Psoas muscle (tissue), 8 donors: ENCODE measurements at regions of chr1 and their contacts with region 1.

Region 1: DNA sequence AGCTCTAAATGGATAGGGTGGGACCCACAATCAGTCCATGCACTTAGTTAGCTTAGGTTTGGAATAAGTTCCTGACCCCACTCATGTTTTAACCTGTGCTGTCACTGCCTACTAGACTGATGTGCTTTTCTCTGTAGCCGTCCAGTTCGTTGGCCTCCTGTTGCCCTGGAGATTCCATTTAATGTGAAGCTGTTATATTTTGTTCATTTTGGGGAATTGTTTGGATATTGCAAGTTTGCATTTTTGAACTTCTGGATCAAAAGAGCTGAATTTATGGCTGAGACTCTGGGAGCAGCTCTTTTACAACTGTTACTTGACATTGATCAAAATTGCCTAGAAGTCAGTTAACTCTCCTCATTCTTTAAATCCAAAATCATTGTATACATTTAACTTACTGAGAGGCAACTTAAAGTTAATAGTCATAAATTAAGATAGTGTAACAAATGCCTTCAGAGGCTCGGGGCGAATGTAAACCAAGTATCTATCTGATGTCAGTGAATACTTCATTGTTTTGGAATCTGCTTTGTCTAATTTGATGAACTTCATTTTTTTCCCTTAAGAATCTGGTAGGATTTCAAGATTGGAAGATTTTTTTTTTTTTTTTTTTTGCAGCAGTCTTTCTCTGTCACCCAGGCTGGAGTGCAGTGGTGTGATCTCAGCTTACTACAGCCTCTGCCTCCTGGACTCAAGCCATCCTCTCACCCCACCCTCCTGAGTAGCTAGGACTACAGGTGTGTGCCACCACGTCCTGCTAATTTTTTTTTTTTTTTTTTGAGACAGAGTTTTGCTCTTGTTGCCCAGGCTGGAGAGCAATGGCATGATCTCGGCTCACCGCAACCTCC is 38.1 kb downstream of the MIGA1 start:
- DNase-seq: no peak
- ATAC-seq: no peak
- H3K4me3 ChIP-seq: no peak overlapping the region
- H3K27ac ChIP-seq: no peak overlapping the region
- H3K4me1 ChIP-seq: no peaks in the 10 kb centered on the region
- H3K27me3 ChIP-seq: no peaks in the 10 kb centered on the region
- CTCF ChIP-seq: no peak

Region 2: DNA sequence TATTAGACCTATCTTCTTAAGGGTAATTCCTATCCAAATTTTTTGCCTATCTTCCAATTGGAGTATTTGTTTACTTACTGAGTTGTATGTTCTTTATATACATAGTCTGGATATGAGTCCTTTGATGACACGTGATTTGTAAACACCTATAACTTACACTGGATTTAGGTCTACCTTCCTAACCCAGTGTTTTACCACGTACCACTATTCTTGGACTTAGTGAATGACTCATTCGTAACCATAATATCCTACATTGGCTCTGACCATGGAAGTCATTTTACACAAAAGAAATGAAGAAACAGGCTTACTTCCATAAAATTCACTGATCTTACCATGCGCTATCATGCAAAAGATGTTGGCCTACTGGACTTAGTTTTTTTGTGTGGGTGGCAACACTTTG is 111.3 kb before region 1 on chr1:
- intact Hi-C with region 1: loop called in 1 of 2 experiments (anchors 10 kb)
- DNase-seq: no peak
- ATAC-seq: no peak
- H3K4me3 ChIP-seq: no peak overlapping the region
- H3K27ac ChIP-seq: no peak overlapping the region
- H3K4me1 ChIP-seq: no peaks in the 10 kb centered on the region
- H3K27me3 ChIP-seq: no peaks in the 10 kb centered on the region
- CTCF ChIP-seq: no peak

Region 3: DNA sequence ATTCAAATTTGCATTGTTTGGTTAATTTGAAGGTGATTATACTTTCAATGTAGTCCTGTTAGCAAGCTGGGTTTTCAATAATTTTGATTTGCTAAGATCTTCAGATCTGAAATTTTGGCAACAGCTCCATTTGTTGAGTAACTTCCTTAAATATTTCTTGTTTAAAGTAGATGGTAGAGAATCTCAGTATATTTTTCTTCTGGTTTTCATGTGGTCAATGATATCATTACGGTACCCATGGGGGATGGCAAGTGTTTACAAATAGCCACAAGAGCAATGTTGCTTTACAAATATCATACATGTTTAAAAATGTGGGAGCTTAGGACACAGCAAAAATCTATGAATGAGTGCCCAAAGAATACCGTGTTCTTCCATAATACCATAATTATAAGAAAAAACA is 1008.0 kb after region 1 on chr1:
- intact Hi-C with region 1: no loop called
- DNase-seq: no peak
- ATAC-seq: no peak
- H3K4me3 ChIP-seq: no peak overlapping the region
- H3K27ac ChIP-seq: no peak overlapping the region
- H3K4me1 ChIP-seq: no peaks in the 10 kb centered on the region
- H3K27me3 ChIP-seq: no peaks in the 10 kb centered on the region
- CTCF ChIP-seq: no peak